ENCODE measurements at regions of chr1 and their contacts with region 1.

Region 1: DNA sequence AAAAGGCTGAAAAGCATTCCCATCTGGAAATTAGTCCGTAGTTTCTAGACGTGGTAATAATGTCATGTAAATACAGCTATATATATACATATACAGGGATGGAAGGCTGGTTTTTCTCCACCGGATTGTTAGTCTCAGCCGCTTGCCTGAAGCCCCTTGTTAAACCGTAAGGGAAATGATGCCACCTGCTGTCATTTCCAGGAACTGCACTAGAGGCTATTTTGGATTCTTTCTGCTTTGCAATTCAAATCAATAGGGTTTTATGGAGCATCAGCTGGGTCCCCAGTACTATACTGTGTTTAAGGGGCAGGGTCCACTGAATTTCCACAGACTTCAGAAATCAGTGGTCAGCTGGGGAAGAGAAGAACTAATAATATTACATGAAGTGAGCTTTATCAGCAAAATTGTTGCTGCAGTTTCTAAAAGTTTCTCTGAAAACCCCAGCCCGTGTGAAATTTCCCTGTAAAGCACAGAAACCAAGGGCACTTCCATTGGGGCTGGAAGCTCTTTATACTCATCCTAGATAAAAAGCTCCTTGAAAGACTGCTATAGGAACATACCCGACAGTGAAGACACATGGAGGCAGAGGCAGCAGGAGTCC is 33.8 kb upstream of the MPZL1 start:
- DNase-seq: peak; percentile 85
- H3K4me3 ChIP-seq: no peak overlapping the region
- H3K27ac ChIP-seq: no peak overlapping the region
- H3K4me1 ChIP-seq: no peaks in the 10 kb centered on the region
- H3K27me3 ChIP-seq: no peaks in the 10 kb centered on the region
- CTCF ChIP-seq: peak; percentile 92

Region 2: GRCh38 chr1:167555971-167556714 is 131.9 kb before region 1 on chr1:
- CTCF ChIA-PET with region 1: interaction called, 3 read pairs
- POLR2A ChIA-PET with region 1: no interaction called
- intact Hi-C with region 1: loop called (anchors 2 kb)
- DNase-seq: peak; percentile 80
- H3K4me3 ChIP-seq: no peak overlapping the region
- H3K27ac ChIP-seq: no peak overlapping the region
- H3K4me1 ChIP-seq: peaks cover 10% of the 10 kb centered on the region
- H3K27me3 ChIP-seq: no peaks in the 10 kb centered on the region
- CTCF ChIP-seq: peak; percentile 91

Region 3: GRCh38 chr1:167599957-167600581 is 88.0 kb before region 1 on chr1:
- CTCF ChIA-PET with region 1: interaction called, 14 read pairs
- POLR2A ChIA-PET with region 1: no interaction called
- intact Hi-C with region 1: loop called (anchors 2 kb)
- DNase-seq: peak; percentile 21
- H3K4me3 ChIP-seq: no peak overlapping the region
- H3K27ac ChIP-seq: no peak overlapping the region
- H3K4me1 ChIP-seq: no peaks in the 10 kb centered on the region
- H3K27me3 ChIP-seq: no peaks in the 10 kb centered on the region
- CTCF ChIP-seq: peak; percentile 49

Region 4: DNA sequence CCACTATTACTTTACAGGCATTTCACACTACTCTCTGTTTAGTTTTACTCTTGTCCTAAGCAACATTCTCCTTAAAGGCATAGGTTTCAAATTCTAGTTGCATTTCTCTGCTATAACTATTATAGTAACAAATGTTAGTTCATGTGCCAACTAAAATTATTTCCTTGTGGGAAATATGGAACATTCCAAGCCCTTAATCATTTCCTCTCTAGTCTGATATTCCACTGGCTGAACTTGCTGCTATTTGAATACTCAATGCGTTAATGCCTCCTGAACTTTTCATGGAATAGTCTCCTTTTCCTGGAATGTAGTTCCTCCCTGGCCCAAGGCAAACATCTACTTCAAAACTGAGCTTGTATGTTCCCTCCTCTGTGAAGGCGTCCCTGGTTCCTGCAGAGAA is 573.4 kb after region 1 on chr1:
- CTCF ChIA-PET with region 1: no interaction called
- POLR2A ChIA-PET with region 1: no interaction called
- intact Hi-C with region 1: no loop called
- DNase-seq: no peak
- H3K4me3 ChIP-seq: no peak overlapping the region
- H3K27ac ChIP-seq: no peak overlapping the region
- H3K4me1 ChIP-seq: no peaks in the 10 kb centered on the region
- H3K27me3 ChIP-seq: no peaks in the 10 kb centered on the region
- CTCF ChIP-seq: no peak